ENCODE measurements at regions of chr5 and their contacts with region 1.

Region 1: DNA sequence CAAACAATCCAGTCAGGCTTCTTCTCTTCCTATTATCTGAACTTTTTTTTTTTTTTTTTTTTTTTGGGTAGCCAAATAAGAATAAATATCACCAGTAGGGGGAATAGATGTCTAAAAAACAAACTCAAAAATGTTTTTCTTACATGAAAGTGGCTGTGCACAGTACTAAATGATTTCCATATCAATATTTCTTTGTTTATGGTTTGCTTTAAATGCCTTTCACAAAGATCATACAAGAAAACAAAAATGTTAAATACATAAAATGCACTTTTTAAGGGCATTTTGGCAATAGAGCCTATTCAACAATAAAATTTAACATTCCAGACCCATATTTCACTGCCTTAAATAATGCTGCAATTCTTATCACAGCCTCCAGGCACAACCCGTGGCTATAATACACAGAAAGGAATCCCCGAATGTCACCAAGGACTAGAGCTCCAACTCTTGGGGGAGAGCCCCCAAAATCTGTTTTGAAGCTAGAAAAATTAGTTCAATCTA is 91.1 kb upstream of the TBCA start:
- DNase-seq: no peak
- H3K4me3 ChIP-seq: no peak overlapping the region
- H3K27ac ChIP-seq: no peak overlapping the region
- H3K4me1 ChIP-seq: no peaks in the 10 kb centered on the region
- H3K27me3 ChIP-seq: no peaks in the 10 kb centered on the region
- CTCF ChIP-seq: peak in 1 of 3 experiments; percentile 32

Region 2: DNA sequence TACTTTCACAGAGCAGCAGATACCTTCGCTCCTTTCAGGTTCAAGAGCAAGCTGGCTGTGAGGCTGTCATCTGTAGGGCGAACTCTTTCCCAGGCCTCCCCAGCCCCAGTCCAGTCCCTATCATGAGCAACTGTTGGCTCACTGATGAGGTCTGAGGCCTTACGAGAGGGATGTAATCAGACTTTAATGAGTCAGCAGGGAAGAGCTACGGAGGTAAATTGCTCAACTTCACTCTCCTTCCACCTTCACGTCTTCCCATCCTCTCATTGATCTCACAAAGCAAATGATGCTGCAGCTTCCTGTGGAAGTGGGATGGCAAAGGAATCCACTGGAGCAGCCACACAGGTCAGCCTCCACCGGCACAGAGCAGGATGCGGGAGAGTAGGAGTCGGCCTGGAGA is 39.6 kb after region 1 on chr5:
- intact Hi-C with region 1: no loop called
- DNase-seq: no peak
- H3K4me3 ChIP-seq: no peak overlapping the region
- H3K27ac ChIP-seq: no peak overlapping the region
- H3K4me1 ChIP-seq: no peaks in the 10 kb centered on the region
- H3K27me3 ChIP-seq: no peaks in the 10 kb centered on the region
- CTCF ChIP-seq: no peak

Region 3: DNA sequence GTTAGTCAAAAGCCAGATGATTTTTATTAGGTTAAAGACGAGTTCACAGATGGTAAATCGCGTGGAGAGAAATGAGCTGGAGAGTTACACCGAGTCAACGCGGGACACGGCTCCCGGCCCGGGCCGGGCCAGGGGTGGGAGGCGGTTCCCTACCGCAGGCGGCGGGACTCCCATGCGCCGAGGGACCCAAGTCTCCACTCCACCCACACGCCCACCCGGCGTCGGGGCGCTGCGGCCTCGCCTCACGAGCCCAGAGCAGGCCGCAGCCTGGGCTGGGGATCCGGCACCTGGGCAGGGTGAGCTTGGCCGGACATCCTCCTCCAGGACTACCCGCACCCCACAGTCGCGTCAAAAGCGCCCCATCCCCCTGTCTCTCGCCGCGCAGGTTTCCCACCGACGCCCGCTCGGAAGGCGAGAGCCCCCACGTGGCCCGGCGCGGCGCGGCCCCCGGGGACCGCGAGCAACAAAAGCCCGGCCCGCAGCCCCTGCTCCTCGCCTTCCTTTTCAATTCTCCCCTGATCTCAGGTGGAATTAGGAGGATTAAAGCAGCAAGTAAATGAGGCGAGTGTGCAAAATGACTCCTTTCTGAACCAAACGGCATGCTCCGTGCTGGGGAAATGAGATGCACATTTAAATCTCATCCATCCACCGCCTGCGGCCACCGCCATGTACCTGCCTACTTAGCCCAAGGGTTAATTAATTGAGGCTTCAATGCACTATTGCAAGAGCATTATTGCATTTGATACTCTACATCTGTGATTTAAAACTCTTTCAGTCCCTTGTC is 105.4 kb after region 1 on chr5:
- intact Hi-C with region 1: no loop called
- DNase-seq: no peak
- H3K4me3 ChIP-seq: peak overlapping the region; percentile 55 to 75
- H3K27ac ChIP-seq: no peak overlapping the region
- H3K4me1 ChIP-seq: peaks cover 5 to 9% of the 10 kb centered on the region in 2 donors
- H3K27me3 ChIP-seq: no peaks in the 10 kb centered on the region
- CTCF ChIP-seq: peak in 1 of 3 experiments; percentile 24

Region 4: GRCh38 chr5:78008356-78008967 is 141.2 kb after region 1 on chr5:
- intact Hi-C with region 1: loop called (anchors 2 kb)
- DNase-seq: no peak
- H3K4me3 ChIP-seq: no peak overlapping the region
- H3K27ac ChIP-seq: no peak overlapping the region
- H3K4me1 ChIP-seq: peaks cover 3 to 5% of the 10 kb centered on the region in 2 donors
- H3K27me3 ChIP-seq: no peaks in the 10 kb centered on the region
- CTCF ChIP-seq: peak in 2 of 3 experiments; percentile 70 to 74

Region 5: DNA sequence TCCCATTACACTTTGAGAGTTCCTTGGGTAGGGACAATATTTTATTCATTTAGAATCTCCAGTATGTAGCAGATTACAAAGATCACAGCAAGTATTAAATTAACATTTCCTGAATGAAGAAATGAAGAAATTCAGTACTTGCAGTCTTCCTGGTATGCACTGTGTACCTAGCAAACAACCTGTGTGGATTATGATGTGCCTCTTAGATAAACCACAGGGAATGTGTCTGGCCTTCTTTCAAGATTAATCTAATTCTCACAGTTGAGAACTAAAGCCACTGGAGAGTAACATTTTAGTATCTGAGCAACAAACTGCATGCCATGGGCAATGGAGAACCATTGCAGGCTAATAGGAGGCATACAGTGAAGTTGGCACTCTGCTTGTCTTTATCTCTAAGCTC is 227.9 kb after region 1 on chr5:
- intact Hi-C with region 1: no loop called
- DNase-seq: no peak
- H3K4me3 ChIP-seq: no peak overlapping the region
- H3K27ac ChIP-seq: no peak overlapping the region
- H3K4me1 ChIP-seq: no peaks in the 10 kb centered on the region
- H3K27me3 ChIP-seq: no peaks in the 10 kb centered on the region
- CTCF ChIP-seq: no peak

Region 6: GRCh38 chr5:78162253-78162862 is 295.1 kb after region 1 on chr5:
- intact Hi-C with region 1: loop called (anchors 5 kb)
- DNase-seq: no peak
- H3K4me3 ChIP-seq: no peak overlapping the region
- H3K27ac ChIP-seq: no peak overlapping the region
- H3K4me1 ChIP-seq: no peaks in the 10 kb centered on the region
- H3K27me3 ChIP-seq: no peaks in the 10 kb centered on the region
- CTCF ChIP-seq: peak in 2 of 3 experiments; percentile 36 to 46

Region 7: DNA sequence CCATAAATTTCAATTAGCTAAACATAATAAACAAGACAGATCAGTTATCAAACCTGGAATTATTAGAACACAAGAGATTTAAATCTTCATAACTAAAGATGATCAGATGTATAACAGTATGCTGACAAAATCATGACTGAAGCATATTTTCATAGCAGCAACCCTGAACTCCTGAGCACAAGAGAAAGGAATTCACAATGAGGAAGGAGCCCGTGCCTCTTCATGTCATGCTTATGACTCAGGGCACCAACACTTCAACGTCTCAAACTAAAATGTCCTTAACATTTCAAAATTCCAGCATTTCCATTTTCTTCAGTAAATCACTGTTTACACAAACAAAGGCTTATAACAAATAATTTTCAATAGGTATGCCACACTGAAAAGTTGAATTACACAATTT is 420.6 kb after region 1 on chr5:
- intact Hi-C with region 1: loop called (anchors 10 kb)
- DNase-seq: no peak
- H3K4me3 ChIP-seq: no peak overlapping the region
- H3K27ac ChIP-seq: no peak overlapping the region
- H3K4me1 ChIP-seq: peaks cover 0 to 5% of the 10 kb centered on the region in 2 donors
- H3K27me3 ChIP-seq: no peaks in the 10 kb centered on the region
- CTCF ChIP-seq: no peak

Measured in ascending aorta (tissue), 2 donors.